Activated B cell treated with CpG ODN at 0.5 μM for 24 hours (primary cell): ENCODE measurements at regions of chrX and their contacts with region 1.

Region 1: DNA sequence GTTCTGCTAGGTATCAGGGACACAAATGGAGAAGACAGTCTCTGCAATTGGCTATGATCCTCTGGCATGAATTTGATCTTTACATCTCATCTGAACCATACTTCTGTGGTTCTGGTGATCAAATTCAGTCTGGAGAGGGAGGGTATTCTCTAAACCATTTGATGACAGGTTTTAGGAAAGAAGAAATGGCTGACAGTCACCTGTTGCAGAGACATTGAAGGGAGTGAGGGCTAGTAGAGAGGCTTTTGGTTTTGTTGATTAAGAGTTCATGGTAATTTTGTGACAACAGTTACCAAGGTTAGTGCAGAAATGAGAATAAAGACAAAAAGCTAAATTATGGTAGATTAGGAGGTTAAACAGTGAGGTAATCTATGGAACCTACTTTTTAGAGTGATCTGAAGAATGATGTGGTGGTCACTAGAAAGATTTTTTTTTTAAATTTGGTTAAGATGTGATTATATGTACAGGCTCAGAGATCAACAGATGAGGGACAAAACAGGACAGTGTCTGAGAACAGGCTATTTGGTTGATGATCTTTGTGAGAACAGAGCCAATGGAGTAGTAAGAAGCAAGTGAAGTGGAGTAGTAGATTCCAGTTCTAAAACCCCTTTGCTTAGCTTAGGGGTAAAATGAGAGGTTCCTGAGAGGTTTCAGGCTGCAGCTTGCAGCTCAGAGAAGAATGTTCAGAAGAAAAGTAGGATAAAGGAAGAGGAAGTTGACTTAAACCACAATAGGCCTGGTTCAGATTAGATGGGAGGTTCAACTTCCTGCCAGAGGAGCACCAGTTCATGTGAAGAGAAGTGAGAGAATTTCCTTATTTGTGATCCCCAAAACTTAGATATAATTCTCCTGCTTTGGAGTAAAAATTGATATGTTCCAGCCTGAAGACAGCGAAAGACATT is 34.7 kb downstream of the VSIG4 start:
- DNase-seq: no peak
- ATAC-seq: peak; percentile 32
- H3K4me3 Mint-ChIP-seq: peak overlapping the region; percentile 45
- H3K27ac Mint-ChIP-seq: peak overlapping the region; percentile 80
- H3K4me1 Mint-ChIP-seq: peaks cover 85% of the 10 kb centered on the region
- H3K27me3 Mint-ChIP-seq: no peaks in the 10 kb centered on the region
- CTCF ChIP-seq: no peak

Region 2: GRCh38 chrX:66015152-66015831 is 10.1 kb after region 1 on chrX:
- CTCF ChIA-PET with region 1: interaction called, 4 read pairs
- POLR2A ChIA-PET with region 1: interaction called, 53 read pairs
- intact Hi-C with region 1: loop called (anchors 1 kb)
- DNase-seq: peak; percentile 16
- ATAC-seq: peak; percentile 43
- H3K4me3 Mint-ChIP-seq: peak overlapping the region; percentile 73
- H3K27ac Mint-ChIP-seq: peak overlapping the region; percentile 93
- H3K4me1 Mint-ChIP-seq: peaks cover 95% of the 10 kb centered on the region
- H3K27me3 Mint-ChIP-seq: no peaks in the 10 kb centered on the region
- CTCF ChIP-seq: no peak